ENCODE measurements at regions of chr5 and their contacts with region 1.

Region 1: GRCh38 chr5:139439013-139439903 is at the start of gene DNAJC18:
- H3K4me3 Mint-ChIP-seq: peak within 1 kb of the TSS; percentile 99
- H3K27ac Mint-ChIP-seq: peak within 1 kb of the TSS; percentile 96
- H3K4me1 Mint-ChIP-seq: peaks cover 27% of the 10 kb centered on the region
- H3K27me3 Mint-ChIP-seq: no peaks in the 10 kb centered on the region

Region 2: DNA sequence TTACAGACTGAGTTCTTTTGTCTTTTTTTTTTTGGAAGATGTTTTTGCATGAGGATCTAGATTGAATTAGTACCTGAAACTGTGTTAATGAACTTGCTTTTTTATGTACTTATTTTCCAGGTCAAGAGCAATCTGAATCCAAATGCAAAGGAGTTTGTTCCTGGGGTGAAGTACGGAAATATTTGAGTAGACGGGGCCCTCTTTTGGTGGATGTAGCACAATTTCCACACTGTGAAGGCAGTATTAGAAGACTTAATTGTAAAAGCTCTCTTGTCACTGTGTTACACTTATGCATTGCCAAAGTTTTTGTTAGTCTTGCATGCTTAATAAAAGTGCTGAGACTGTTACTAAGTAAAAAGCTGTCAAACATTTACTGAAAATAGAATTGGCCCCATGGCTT is 70.6 kb before region 1 on chr5:
- intact Hi-C with region 1: no loop called
- H3K4me3 Mint-ChIP-seq: no peak overlapping the region
- H3K27ac Mint-ChIP-seq: no peak overlapping the region
- H3K4me1 Mint-ChIP-seq: no peaks in the 10 kb centered on the region
- H3K27me3 Mint-ChIP-seq: no peaks in the 10 kb centered on the region

Region 3: GRCh38 chr5:139403787-139404483 is 35.3 kb before region 1 on chr5 and contains the start of gene SPATA24:
- intact Hi-C with region 1: loop called (anchors 1 kb)
- H3K4me3 Mint-ChIP-seq: peak within 1 kb of the TSS; percentile 82
- H3K27ac Mint-ChIP-seq: peak within 1 kb of the TSS; percentile 95
- H3K4me1 Mint-ChIP-seq: peaks cover 29% of the 10 kb centered on the region
- H3K27me3 Mint-ChIP-seq: no peaks in the 10 kb centered on the region

Region 4: DNA sequence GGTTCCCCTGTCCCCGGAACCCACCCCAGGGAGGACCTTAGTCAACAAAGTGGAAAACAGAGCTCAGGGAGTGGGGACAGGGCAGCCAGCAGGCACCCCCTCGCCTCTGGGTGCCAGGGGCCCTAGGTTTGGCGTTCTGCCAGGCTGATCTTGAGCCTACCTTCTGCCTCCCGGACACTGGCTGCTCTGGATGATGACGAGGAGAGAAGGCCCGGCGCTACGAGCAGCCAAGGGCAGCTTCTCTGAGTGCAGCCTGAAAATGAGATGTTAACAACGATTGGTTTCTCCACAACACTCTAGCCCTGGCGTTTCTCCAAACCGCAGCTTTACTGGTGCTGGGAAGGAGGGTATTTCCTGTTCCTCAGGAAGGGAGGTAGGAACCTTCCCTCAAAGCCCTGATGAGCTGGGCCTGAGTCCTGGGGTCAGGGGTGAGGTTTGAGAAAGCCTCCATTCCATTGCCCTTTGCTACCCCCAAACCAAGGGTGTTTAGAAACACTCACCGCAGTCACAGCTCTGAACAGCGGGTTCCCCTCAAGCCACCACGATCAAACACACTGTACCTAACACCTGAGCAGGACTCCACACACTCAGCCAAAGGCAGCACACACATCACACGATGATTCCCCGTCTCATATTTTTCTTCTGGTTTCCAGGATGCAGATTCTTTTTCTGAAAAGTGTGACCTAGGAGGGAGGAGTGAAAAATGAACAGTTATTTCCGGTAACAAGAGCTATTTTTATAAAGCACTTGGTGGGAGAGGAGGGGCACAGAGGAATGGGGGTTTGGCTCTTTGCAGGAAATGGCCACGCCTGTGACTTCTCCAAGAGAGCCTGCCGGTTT is 43.0 kb after region 1 on chr5 and contains the start of gene STING1:
- intact Hi-C with region 1: loop called (anchors 5 kb)
- H3K4me3 Mint-ChIP-seq: peak within 1 kb of the TSS; percentile 73
- H3K27ac Mint-ChIP-seq: peak within 1 kb of the TSS; percentile 87
- H3K4me1 Mint-ChIP-seq: peaks cover 38% of the 10 kb centered on the region
- H3K27me3 Mint-ChIP-seq: no peaks in the 10 kb centered on the region

Region 5: DNA sequence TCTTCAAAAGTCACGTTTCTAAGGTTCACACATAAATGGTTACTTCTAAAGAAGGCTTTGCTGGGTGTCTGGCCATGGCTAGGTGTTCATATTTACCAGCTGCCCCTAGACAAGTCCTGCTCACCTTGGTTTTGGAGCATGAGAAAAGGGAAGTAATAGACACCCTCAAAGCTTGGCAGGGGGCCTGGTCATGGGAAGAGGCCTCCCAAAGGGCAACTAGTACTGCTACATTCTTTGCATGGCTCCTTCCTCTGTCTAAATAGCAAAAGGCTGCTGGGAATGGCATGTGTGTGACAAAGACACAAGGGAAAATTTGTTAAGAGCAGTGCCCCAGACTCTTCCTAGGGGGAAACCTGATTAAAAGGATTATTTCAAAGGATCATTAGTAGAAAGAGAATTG is 510.5 kb after region 1 on chr5:
- intact Hi-C with region 1: no loop called
- H3K4me3 Mint-ChIP-seq: no peak overlapping the region
- H3K27ac Mint-ChIP-seq: no peak overlapping the region
- H3K4me1 Mint-ChIP-seq: peaks cover 24% of the 10 kb centered on the region
- H3K27me3 Mint-ChIP-seq: peaks cover 5% of the 10 kb centered on the region

Region 6: DNA sequence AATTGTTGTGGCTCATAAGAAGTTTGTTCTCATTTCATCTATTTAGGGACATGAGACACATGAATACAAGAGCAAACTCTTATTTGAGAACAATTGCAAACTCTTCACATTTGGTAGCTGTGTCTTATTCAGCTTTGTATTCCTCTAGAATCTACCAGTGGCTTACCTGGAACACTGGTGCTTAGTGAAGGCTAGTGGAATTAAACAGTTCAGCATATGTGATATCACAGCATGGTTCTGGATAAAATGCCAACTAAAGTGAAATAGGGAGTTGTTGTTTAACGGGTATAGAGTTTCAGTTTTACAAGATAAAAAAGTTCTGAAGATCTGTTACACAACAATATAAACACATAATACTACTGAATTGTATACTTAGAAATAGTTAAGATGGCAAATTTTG is 555.0 kb after region 1 on chr5:
- intact Hi-C with region 1: no loop called
- H3K4me3 Mint-ChIP-seq: no peak overlapping the region
- H3K27ac Mint-ChIP-seq: no peak overlapping the region
- H3K4me1 Mint-ChIP-seq: no peaks in the 10 kb centered on the region
- H3K27me3 Mint-ChIP-seq: peaks cover 36% of the 10 kb centered on the region